ENCODE measurements at regions of chr11 and their contacts with region 1.

Region 1: GRCh38 chr11:66408488-66409214 is 12.2 kb upstream of the NPAS4 start:
- DNase-seq: peak; percentile 82 to 92 (median 90)
- H3K4me3 ChIP-seq: peak overlapping the region; percentile 61
- H3K4me3 Mint-ChIP-seq: peak overlapping the region; percentile 21 to 90 (median 81)
- H3K27ac ChIP-seq: no peak overlapping the region
- H3K27ac Mint-ChIP-seq: peak overlapping the region in 5 of 8 donors; percentile 34 to 83 (median 64)
- H3K4me1 ChIP-seq: peaks cover 3% of the 10 kb centered on the region
- H3K4me1 Mint-ChIP-seq: peaks cover 2 to 5% (median 4%) of the 10 kb centered on the region in 3 donors
- H3K27me3 ChIP-seq: peaks cover 9% of the 10 kb centered on the region
- H3K27me3 Mint-ChIP-seq: peaks cover 24 to 52% of the 10 kb centered on the region in 2 donors

Region 2: GRCh38 chr11:66349014-66349386 is 59.7 kb before region 1 on chr11:
- CTCF ChIA-PET with region 1: no interaction called
- POLR2A ChIA-PET with region 1: no interaction called
- DNase-seq: peak in 1 of 5 donors; percentile 36
- H3K4me3 ChIP-seq: no peak overlapping the region
- H3K4me3 Mint-ChIP-seq: peak overlapping the region; percentile 17 to 100 (median 96)
- H3K27ac ChIP-seq: no peak overlapping the region
- H3K27ac Mint-ChIP-seq: peak overlapping the region; percentile 24 to 99 (median 49)
- H3K4me1 ChIP-seq: peaks cover 31% of the 10 kb centered on the region
- H3K4me1 Mint-ChIP-seq: peaks cover 25 to 43% (median 30%) of the 10 kb centered on the region in 3 donors
- H3K27me3 ChIP-seq: no peaks in the 10 kb centered on the region
- H3K27me3 Mint-ChIP-seq: peaks cover 0 to 8% of the 10 kb centered on the region in 2 donors

Region 3: DNA sequence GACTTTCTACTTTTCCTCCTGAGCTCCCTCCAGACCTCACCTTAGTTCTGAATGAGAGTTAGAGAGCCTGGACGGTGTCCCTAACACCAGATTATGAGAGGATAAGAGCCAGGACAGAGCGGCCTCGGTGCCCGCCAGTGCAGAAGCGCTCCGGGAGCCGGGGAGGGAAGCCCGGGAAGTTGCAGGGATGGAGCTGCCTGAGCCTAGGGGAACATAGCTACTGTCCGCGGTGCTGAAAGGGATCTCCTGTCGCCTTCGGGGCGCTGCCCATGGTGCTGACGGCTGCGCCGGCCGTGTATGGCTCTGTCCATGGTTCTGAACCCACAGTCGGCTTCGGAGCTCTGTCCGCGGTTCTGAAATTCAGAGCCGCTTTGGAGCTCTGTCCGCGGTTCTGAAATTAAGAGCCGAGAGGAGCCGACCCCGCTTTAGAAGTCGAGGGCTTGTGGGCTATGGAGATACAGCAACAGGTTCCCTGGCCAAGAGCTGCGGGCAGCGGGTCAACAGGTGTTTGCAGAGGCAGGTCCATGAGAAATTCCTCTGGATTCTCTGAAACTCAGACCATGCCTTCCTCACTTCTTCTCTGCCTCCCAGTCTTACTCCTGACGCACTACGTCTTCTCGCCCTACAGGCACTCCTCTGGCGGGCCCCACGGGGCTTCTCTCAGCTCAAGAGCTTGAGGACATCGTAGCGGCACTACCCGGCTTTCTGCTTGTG is 13.0 kb after region 1 on chr11:
- CTCF ChIA-PET with region 1: interaction called, 10 read pairs
- POLR2A ChIA-PET with region 1: interaction called, 3 read pairs
- DNase-seq: peak; percentile 81 to 92 (median 84)
- H3K4me3 ChIP-seq: no peak overlapping the region
- H3K4me3 Mint-ChIP-seq: peak overlapping the region in 2 of 7 donors; percentile 18 to 25
- H3K27ac ChIP-seq: no peak overlapping the region
- H3K27ac Mint-ChIP-seq: peak overlapping the region in 2 of 8 donors; percentile 42 to 88
- H3K4me1 ChIP-seq: no peaks in the 10 kb centered on the region
- H3K4me1 Mint-ChIP-seq: peaks cover 5 to 13% (median 8%) of the 10 kb centered on the region in 3 donors
- H3K27me3 ChIP-seq: peaks cover 29% of the 10 kb centered on the region
- H3K27me3 Mint-ChIP-seq: peaks cover 26 to 30% of the 10 kb centered on the region in 2 donors

Region 4: GRCh38 chr11:66457826-66458225 is 49.2 kb after region 1 on chr11:
- CTCF ChIA-PET with region 1: no interaction called
- POLR2A ChIA-PET with region 1: no interaction called
- DNase-seq: no peak
- H3K4me3 ChIP-seq: no peak overlapping the region
- H3K4me3 Mint-ChIP-seq: no peak overlapping the region
- H3K27ac ChIP-seq: no peak overlapping the region
- H3K27ac Mint-ChIP-seq: no peak overlapping the region
- H3K4me1 ChIP-seq: peaks cover 12% of the 10 kb centered on the region
- H3K4me1 Mint-ChIP-seq: peaks cover 12 to 17% (median 17%) of the 10 kb centered on the region in 3 donors
- H3K27me3 ChIP-seq: no peaks in the 10 kb centered on the region
- H3K27me3 Mint-ChIP-seq: peaks cover 0 to 2% of the 10 kb centered on the region in 2 donors